SK-N-SH (cell line): ENCODE measurements at regions of chr19 and their contacts with region 1.

Region 1: DNA sequence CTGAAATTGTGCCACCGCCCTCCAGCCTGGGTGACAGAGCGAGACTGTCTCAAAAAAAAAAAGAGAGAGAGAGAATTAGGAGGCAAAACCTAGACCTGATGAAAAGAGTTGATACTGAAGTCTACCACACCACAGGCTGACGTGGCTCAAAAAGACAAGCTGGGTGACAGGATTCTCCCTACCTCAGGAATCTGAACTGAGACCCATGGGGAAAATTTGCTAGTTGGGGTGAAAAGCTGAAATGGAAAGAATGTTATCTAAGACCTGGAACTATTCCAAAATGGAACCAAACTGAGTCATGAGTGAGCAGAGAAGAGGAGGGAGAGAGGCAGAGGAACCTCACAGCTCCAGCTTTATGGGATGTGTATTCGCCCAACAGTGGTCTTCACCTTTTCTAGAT is 11.7 kb downstream of the SMG9 start:
- DNase-seq: no peak
- H3K4me3 ChIP-seq: no peak overlapping the region
- H3K27ac ChIP-seq: no peak overlapping the region
- H3K4me1 ChIP-seq: no peaks in the 10 kb centered on the region
- H3K27me3 ChIP-seq: no peaks in the 10 kb centered on the region
- CTCF ChIP-seq: no peak
- EP300 ChIP-seq: no peak
- RAD21 ChIP-seq: no peak

Region 2: GRCh38 chr19:43692877-43693276 is 50.1 kb before region 1 on chr19:
- CTCF ChIA-PET with region 1: no interaction called
- POLR2A ChIA-PET with region 1: no interaction called
- DNase-seq: no peak
- H3K4me3 ChIP-seq: no peak overlapping the region
- H3K27ac ChIP-seq: no peak overlapping the region
- H3K4me1 ChIP-seq: peaks cover 0 to 1% of the 10 kb centered on the region in 2 experiments; a peak in 1 of 4 replicates
- H3K27me3 ChIP-seq: no peaks in the 10 kb centered on the region; the same call in 1 of the 2 replicates
- CTCF ChIP-seq: no peak
- EP300 ChIP-seq: no peak
- RAD21 ChIP-seq: no peak

Region 3: DNA sequence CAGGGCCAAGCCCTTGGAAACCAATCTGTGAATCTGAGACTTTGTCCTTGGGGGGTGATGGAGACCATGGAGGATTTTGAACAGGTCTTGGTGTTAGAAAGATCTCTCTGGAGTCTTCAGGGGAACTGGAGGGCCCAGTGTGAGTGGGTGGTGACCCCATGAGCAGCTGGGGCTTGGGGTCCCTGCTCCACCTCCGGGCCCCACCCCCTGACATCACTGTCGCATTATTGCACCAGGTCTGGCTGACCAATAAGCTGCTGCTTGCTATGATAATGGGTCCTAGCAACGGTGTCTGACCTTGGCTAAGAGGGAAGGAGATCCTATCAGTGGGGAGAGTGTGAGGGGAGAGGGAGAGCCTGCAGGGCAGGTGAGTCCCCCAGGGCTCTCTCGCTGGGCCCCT is 27.2 kb before region 1 on chr19 and contains the start of gene IRGC:
- CTCF ChIA-PET with region 1: interaction called, 11 read pairs
- POLR2A ChIA-PET with region 1: no interaction called
- DNase-seq: no peak
- H3K4me3 ChIP-seq: no peak within 1 kb of the TSS
- H3K27ac ChIP-seq: no peak within 1 kb of the TSS
- H3K4me1 ChIP-seq: 0 out of 4 replicates have a peak, but pooled peaks cover 0 to 6% of the 10 kb centered on the region in 2 experiments
- H3K27me3 ChIP-seq: no peaks in the 10 kb centered on the region
- CTCF ChIP-seq: no peak
- EP300 ChIP-seq: no peak
- RAD21 ChIP-seq: no peak
- polyA plus RNA-seq, gene IRGC: not detected in 2 replicates

Region 4: GRCh38 chr19:43754503-43755255 is 11.7 kb after region 1 on chr19 and contains the start of gene SMG9:
- CTCF ChIA-PET with region 1: interaction called, 30 read pairs
- POLR2A ChIA-PET with region 1: interaction called, 4 read pairs
- DNase-seq: peak; percentile 97
- H3K4me3 ChIP-seq: peak within 1 kb of the TSS; percentile 74 to 87
- H3K27ac ChIP-seq: peak within 1 kb of the TSS; percentile 98 to 100
- H3K4me1 ChIP-seq: peaks cover 7 to 50% of the 10 kb centered on the region in 2 experiments; a peak in 3 of 4 replicates
- H3K27me3 ChIP-seq: no peaks in the 10 kb centered on the region
- CTCF ChIP-seq: no peak
- EP300 ChIP-seq: no peak
- RAD21 ChIP-seq: no peak
- polyA plus RNA-seq, gene SMG9: 17.3 and 24.3 TPM in 2 replicates

Region 5: DNA sequence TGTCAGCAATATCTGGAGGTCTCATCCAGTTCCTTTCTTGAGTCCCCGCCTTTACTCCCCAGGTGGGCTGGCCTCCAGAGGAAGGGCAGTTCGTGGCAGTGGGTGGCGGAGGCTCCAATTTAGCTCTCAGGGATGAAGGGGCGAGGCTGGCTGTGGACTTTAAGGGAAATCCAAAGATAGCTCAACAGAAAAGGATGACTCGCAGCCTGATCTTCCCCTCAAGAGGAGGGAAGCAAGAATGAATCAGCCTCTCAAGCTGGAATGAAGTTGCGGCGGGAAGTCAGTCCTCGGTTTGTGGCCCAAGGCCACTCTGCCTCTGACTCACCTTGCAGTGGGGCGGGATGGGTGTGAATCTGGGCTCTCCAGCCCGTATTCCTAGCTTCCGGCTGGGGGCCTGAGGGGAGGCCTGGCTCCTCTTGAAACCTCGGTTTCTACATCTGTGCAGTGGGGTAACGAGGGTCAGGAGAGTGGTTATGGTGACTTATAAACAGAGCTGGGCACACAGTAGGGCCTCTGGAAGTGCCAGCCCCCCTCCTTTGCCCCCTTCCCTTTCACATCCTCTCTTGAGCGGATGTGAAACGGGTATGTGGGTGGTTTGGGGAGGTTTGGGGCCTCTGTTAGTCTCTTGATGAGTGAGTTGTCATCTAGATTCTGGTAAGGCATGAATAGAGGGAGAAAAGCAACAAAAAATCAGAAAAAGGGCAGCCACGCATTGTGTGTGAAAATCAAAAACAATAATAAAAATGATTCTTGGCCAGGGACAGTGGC is 22.3 kb after region 1 on chr19:
- CTCF ChIA-PET with region 1: interaction called, 16 read pairs
- POLR2A ChIA-PET with region 1: no interaction called
- DNase-seq: no peak
- H3K4me3 ChIP-seq: no peak overlapping the region
- H3K27ac ChIP-seq: peak overlapping the region; percentile 11 to 94; a peak in 3 of 4 replicates
- H3K4me1 ChIP-seq: peaks cover 0 to 21% of the 10 kb centered on the region in 2 experiments; a peak in 3 of 4 replicates
- H3K27me3 ChIP-seq: no peaks in the 10 kb centered on the region
- CTCF ChIP-seq: no peak
- EP300 ChIP-seq: peak in 1 of 2 experiments; percentile 81; a peak in 1 of 4 replicates
- RAD21 ChIP-seq: no peak

Region 6: DNA sequence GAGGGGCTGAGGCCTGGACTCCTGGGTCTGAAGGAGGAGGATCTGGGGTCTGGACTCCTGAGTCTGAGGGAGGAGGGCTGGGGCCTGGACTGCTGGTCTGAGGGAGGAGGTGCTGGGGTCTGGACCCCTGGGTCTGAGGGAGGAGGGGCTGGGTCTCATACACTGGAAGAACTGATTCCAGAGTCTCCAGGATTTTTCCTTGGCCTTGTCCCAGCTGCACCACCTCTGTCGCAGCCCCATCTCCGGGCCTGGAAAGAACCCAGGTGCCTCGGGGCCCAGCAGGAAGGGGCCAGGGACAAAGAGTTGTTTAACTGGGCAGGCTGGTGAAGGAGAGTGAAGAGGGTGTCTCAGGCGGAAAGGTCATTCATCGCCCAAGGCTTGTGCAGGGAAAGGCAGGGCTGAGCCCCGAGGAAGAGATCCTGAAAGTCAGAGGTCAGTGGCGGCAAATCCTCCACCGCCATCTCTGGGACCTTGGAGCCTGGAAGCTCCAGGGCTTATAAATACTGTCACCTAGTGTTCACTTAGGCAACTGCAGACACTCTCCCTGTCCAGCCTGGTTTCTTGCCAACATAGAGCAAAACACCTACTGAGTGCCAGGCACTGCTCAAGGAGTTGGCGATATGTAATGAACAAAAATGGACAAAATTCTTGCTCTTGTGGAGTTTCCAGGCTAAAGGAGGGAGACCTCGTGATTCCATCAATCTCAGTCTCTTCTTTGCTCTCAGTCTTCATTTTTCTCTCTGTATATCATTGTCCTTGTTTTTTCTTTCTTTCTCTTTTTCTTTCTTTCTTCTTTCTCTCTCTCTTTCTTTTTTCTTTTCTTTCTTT is 42.2 kb after region 1 on chr19:
- CTCF ChIA-PET with region 1: interaction called, 79 read pairs
- POLR2A ChIA-PET with region 1: no interaction called
- DNase-seq: peak; percentile 84
- H3K4me3 ChIP-seq: no peak overlapping the region; a peak in 1 of 4 replicates
- H3K27ac ChIP-seq: peak overlapping the region in 1 of 2 experiments; percentile 60; a peak in 2 of 4 replicates
- H3K4me1 ChIP-seq: peaks cover 3 to 20% of the 10 kb centered on the region in 2 experiments; a peak in 3 of 4 replicates
- H3K27me3 ChIP-seq: no peaks in the 10 kb centered on the region
- CTCF ChIP-seq: peak; percentile 99
- EP300 ChIP-seq: no peak
- RAD21 ChIP-seq: peak; percentile 94

Region 7: DNA sequence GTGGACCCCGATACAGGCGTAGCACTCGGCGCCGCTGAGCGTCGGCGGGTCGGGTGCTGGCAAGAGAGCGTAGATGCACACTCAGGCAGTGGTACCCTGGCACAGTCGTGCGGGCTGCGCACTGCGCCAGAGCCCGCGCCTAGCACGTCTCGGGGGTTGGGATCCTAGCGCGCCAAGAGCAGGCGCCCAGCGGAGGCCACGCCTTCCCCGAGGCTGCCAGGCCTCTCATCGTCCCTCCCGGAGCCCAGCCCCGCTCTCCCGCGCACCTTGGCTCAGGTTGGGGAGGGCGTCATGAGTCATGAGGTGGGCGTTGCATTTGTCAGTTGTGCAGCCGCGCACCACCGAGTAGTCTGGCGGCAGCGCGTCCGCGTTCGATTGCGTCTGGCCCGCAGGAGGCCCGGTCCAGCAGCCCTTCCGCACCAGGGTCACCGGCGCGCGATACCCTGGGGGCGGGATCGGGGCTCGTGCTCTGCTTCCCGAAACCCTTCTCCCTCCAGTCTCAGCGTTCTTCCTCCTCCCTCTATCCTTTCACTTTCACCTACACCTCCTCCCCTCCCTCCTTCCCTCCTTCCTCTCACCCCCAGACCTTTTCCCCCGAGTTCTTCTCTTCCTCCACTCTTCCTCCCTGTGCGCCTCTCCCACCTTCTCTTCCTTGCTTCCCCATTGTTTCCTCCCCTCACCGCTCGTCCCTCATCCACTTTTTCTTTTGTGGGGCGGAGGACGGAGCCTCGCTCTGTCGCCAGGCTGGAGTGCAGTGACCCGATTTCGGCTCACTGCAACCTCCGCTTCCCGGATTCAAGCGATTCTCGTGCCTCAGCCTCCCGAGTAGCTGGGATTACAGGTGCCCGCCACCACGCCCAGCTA is 55.8 kb after region 1 on chr19:
- CTCF ChIA-PET with region 1: interaction called, 16 read pairs
- POLR2A ChIA-PET with region 1: no interaction called
- DNase-seq: peak; percentile 65
- H3K4me3 ChIP-seq: peak overlapping the region; percentile 32 to 34
- H3K27ac ChIP-seq: no peak overlapping the region
- H3K4me1 ChIP-seq: peaks cover 0 to 7% of the 10 kb centered on the region in 2 experiments; a peak in 1 of 4 replicates
- H3K27me3 ChIP-seq: peaks cover 18% of the 10 kb centered on the region; the same call in 1 of the 2 replicates
- CTCF ChIP-seq: no peak
- EP300 ChIP-seq: no peak
- RAD21 ChIP-seq: no peak

Region 8: GRCh38 chr19:43809762-43810696 is 67.0 kb after region 1 on chr19:
- CTCF ChIA-PET with region 1: interaction called, 21 read pairs
- POLR2A ChIA-PET with region 1: no interaction called
- DNase-seq: peak; percentile 55
- H3K4me3 ChIP-seq: no peak overlapping the region
- H3K27ac ChIP-seq: no peak overlapping the region
- H3K4me1 ChIP-seq: no peaks in the 10 kb centered on the region
- H3K27me3 ChIP-seq: peaks cover 12% of the 10 kb centered on the region; the same call in 1 of the 2 replicates
- CTCF ChIP-seq: peak; percentile 67
- EP300 ChIP-seq: no peak
- RAD21 ChIP-seq: peak; percentile 71